Posterior cingulate gyrus (tissue), 11 donors: ENCODE measurements at regions of chr7 and their contacts with region 1.

Region 1: GRCh38 chr7:153835104-153835503 is 217.1 kb upstream of the DPP6 start:
- DNase-seq: no peak

Region 2: DNA sequence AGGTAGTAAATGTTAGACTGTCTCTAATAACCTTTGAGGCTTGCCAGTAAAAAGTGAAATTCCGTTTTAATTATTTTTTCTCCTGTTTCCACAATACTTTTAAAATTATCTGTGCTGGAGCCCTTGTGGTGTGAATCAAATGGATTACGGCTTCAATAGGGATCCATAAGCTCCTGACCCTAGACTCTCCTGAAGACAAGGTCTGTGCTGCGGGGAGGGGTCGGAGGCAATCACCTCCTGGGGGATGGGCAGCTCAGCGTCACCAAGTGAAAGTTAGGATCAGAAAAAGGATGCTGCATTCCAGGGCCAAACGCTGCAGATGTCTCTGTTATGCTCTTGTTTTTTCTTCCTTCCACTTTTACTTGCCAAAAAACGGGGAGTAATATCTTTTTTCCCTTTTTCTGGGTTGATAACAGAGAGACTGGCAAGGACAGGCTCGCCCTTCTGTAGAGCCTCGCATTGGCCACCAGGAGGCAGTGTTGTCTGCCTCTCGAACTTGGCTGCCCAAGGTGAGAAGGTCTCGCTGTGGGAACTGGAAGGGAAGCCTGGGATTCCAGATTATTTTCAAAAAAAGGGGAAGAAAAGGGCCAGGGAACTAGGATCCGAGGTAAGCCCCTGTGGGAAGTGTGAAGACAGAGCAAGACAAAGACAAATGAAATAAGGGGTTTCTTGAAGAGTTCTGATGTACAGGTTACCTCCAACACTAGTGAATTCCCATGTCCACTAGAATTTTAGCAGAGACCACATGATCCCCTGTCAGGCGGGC is 453.6 kb before region 1 on chr7:
- intact Hi-C with region 1: loop called (anchors 5 kb)
- DNase-seq: peak in 8 of 10 donors; percentile 30 to 92 (median 52)